ENCODE measurements at regions of chr7 and their contacts with region 1.

Region 1: GRCh38 chr7:11343818-11344413 is 370.2 kb downstream of the PHF14 start:
- DNase-seq: peak in 4 of 5 donors; percentile 18 to 42 (median 31)
- H3K4me3 ChIP-seq: no peak overlapping the region
- H3K4me3 Mint-ChIP-seq: peak overlapping the region in 1 of 8 donors; percentile 14
- H3K27ac ChIP-seq: no peak overlapping the region
- H3K27ac Mint-ChIP-seq: no peak overlapping the region
- H3K4me1 ChIP-seq: peaks cover 5% of the 10 kb centered on the region
- H3K4me1 Mint-ChIP-seq: peaks cover 0 to 7% (median 4%) of the 10 kb centered on the region in 4 donors
- H3K27me3 ChIP-seq: no peaks in the 10 kb centered on the region
- H3K27me3 Mint-ChIP-seq: peaks cover 1 to 9% of the 10 kb centered on the region in 2 donors

Region 2: DNA sequence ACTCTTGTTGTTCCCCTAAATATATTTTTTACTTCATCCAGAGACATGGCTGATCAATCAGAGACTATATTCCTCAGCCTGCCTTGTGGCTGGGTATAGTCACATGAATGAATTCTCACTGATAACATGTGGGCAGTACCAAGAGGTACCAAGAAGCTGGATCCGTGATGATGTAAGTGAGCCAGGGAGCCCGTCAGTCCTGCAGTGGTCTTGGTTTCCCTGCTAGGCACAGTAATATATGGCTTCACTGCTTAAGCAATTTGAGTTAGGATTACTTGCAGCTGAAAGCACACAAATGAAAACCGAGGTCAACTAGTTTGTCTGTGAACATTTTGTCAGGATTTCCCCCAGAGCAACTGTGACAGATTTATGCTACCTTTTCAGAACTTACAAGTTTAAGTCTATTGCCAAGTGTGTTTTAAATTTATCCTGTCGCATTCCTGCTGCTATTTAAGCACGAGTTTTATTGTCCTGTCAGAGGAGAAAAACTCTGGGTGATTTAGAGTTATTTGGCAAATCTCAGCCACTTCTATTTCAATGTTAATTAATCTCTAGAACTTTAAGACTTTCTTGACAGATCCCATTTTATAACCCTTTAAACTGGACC is 11.6 kb after region 1 on chr7:
- CTCF ChIA-PET with region 1: interaction called, 15 read pairs
- POLR2A ChIA-PET with region 1: no interaction called
- intact Hi-C with region 1: no loop called
- DNase-seq: no peak
- H3K4me3 ChIP-seq: no peak overlapping the region
- H3K4me3 Mint-ChIP-seq: no peak overlapping the region
- H3K27ac ChIP-seq: no peak overlapping the region
- H3K27ac Mint-ChIP-seq: no peak overlapping the region
- H3K4me1 ChIP-seq: no peaks in the 10 kb centered on the region
- H3K4me1 Mint-ChIP-seq: no peaks in the 10 kb centered on the region
- H3K27me3 ChIP-seq: no peaks in the 10 kb centered on the region
- H3K27me3 Mint-ChIP-seq: peaks cover 5 to 7% of the 10 kb centered on the region in 2 donors

Measured in CD4-positive, alpha-beta memory T cell (primary cell).